Mammary epithelial cell (primary cell): ENCODE measurements at regions of chr19 and their contacts with region 1.

Region 1: DNA sequence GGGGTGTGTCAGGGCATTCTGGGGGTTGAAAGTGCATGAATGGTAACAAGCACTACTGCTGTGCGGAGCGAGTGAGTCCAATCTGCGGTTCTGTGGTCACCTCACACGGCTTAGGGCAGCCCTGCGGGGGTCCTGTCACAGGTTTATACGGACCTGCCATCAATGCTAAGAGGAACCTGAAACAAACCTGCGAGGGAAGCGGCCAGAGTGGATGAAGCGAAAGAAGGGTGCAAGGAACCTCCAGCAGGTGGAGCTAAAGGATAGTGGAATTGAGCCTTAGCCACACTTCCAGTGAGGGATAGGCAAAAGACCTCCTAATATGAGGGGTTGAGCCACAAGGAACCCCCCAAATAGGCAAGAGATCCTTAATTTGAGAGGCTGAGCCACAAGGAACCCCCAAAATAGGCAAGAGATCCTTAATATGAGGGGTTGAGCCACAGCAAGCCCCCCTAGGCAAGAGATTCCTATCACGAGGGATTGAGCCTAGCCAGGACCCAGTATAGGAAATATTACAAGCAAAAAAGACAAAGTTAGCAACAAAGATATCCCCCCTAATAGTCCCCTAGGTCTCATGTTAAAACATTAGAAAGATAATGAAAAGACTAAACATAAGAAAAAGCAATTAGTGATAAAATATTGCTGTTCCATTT is 6.3 kb upstream of the ZNF69 start:
- DNase-seq: peak; percentile 48
- H3K4me3 ChIP-seq: no peak overlapping the region
- H3K27ac ChIP-seq: no peak overlapping the region
- H3K4me1 ChIP-seq: no peaks in the 10 kb centered on the region
- H3K27me3 ChIP-seq: no peaks in the 10 kb centered on the region
- CTCF ChIP-seq: peak; percentile 38 to 73

Region 2: GRCh38 chr19:12055783-12056182 is 174.5 kb after region 1 on chr19:
- CTCF ChIA-PET with region 1: interaction called, 5 read pairs
- dilution Hi-C with region 1: no loop called
- in situ Hi-C with region 1: no loop called
- intact Hi-C with region 1: loop called (anchors 2 kb)
- DNase-seq: no peak
- H3K4me3 ChIP-seq: no peak overlapping the region
- H3K27ac ChIP-seq: no peak overlapping the region
- H3K4me1 ChIP-seq: peaks cover 4% of the 10 kb centered on the region
- H3K27me3 ChIP-seq: peaks cover 2% of the 10 kb centered on the region
- CTCF ChIP-seq: no peak